ENCODE measurements at regions of chr16 and their contacts with region 1.

Region 1: GRCh38 chr16:29839822-29840221 is 19.6 kb downstream of the MVP start:
- DNase-seq: no peak
- ATAC-seq: no peak
- H3K4me3 Mint-ChIP-seq: no peak overlapping the region
- H3K27ac Mint-ChIP-seq: no peak overlapping the region
- H3K4me1 Mint-ChIP-seq: no peaks in the 10 kb centered on the region
- H3K27me3 Mint-ChIP-seq: no peaks in the 10 kb centered on the region

Region 2: GRCh38 chr16:29815793-29816693 is 23.8 kb before region 1 on chr16 and contains the start of gene PAGR1:
- POLR2A ChIA-PET with region 1: interaction called, 12 read pairs
- DNase-seq: peak; percentile 96
- ATAC-seq: peak; percentile 78
- H3K4me3 Mint-ChIP-seq: peak within 1 kb of the TSS; percentile 93
- H3K27ac Mint-ChIP-seq: peak within 1 kb of the TSS; percentile 96
- H3K4me1 Mint-ChIP-seq: peaks cover 39% of the 10 kb centered on the region
- H3K27me3 Mint-ChIP-seq: peaks cover 12% of the 10 kb centered on the region
- total RNA-seq, gene PAGR1: 29.8 to 34.3 TPM

Region 3: DNA sequence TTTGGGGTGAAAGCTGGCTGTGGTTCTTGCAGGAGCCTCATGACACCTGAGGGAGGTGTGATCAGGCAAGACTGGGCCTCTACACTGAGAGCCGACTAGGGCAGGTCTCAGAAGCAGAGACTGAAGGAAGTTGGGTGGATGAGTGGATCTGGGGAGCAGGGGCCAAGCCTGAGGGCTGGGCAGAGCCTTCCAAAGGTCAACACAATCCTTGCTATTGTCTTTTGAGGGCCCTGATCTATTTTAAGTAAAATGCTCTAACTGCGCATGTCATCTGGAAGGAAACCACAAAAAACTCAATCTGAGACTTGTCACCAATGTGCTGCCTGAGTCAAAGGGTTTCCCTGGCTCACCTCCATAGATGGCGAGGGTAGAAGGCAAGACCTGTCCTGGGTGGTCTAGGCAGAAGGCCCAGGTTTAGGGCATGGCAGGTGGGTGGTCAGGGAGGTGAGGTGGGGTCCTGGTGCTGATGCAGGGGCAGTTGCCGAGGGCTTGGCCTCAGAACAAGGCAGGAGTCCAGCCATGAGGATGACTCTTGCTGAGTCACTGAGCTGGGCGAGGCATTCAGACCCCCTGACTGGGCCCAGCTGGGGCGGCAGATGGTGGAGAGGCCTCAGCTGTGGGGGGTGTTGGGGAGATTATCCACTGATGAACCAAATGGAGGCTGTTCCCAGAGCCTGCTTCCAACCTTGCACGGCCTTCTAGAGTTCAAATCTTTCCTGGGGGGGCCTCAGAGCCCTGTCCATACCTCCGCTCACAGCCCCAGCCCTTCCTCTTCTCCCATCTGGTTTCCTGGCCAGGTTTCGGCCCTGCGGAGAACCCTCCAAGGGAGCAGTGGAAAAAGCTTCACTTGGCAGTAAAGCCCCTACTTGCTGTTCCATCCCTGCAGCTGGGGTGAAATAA is 14.4 kb before region 1 on chr16:
- POLR2A ChIA-PET with region 1: interaction called, 10 read pairs
- DNase-seq: peak; percentile 47
- ATAC-seq: peak; percentile 35
- H3K4me3 Mint-ChIP-seq: peak overlapping the region; percentile 69
- H3K27ac Mint-ChIP-seq: peak overlapping the region; percentile 83
- H3K4me1 Mint-ChIP-seq: peaks cover 45% of the 10 kb centered on the region
- H3K27me3 Mint-ChIP-seq: no peaks in the 10 kb centered on the region

Region 4: GRCh38 chr16:29995911-29996772 is 156.3 kb after region 1 on chr16 and contains the start of gene INO80E:
- POLR2A ChIA-PET with region 1: no interaction called
- DNase-seq: peak; percentile 99
- ATAC-seq: peak; percentile 95
- H3K4me3 Mint-ChIP-seq: peak within 1 kb of the TSS; percentile 98
- H3K27ac Mint-ChIP-seq: peak within 1 kb of the TSS; percentile 97
- H3K4me1 Mint-ChIP-seq: peaks cover 25% of the 10 kb centered on the region
- H3K27me3 Mint-ChIP-seq: no peaks in the 10 kb centered on the region
- total RNA-seq, gene INO80E: 113 to 118 TPM